H1 (cell line): ENCODE measurements at regions of chr22 and their contacts with region 1.

Region 1: GRCh38 chr22:32528984-32529982 is 54.7 kb downstream of the FBXO7 start:
- DNase-seq: peak; percentile 63 to 84
- H3K4me3 ChIP-seq: no peak overlapping the region
- H3K27ac ChIP-seq: no peak overlapping the region
- H3K4me1 ChIP-seq: no peaks in the 10 kb centered on the region; a peak in 1 of 7 replicates
- H3K27me3 ChIP-seq: no peaks in the 10 kb centered on the region
- CTCF ChIP-seq: peak; percentile 82 to 96 (median 93)
- EP300 ChIP-seq: no peak
- POLR2A ChIP-seq: no peak
- RAD21 ChIP-seq: peak; percentile 93 to 96

Region 2: GRCh38 chr22:32518848-32519247 is 10.4 kb before region 1 on chr22:
- CTCF ChIA-PET with region 1: interaction called, 20 read pairs
- POLR2A ChIA-PET with region 1: no interaction called
- DNase-seq: no peak
- H3K4me3 ChIP-seq: no peak overlapping the region
- H3K27ac ChIP-seq: no peak overlapping the region
- H3K4me1 ChIP-seq: no peaks in the 10 kb centered on the region
- H3K27me3 ChIP-seq: no peaks in the 10 kb centered on the region
- CTCF ChIP-seq: peak in 1 of 3 experiments; percentile 52; a peak in 1 of 4 replicates
- EP300 ChIP-seq: no peak
- POLR2A ChIP-seq: no peak
- RAD21 ChIP-seq: peak in 1 of 2 experiments; percentile 27; a peak in 1 of 4 replicates

Region 3: DNA sequence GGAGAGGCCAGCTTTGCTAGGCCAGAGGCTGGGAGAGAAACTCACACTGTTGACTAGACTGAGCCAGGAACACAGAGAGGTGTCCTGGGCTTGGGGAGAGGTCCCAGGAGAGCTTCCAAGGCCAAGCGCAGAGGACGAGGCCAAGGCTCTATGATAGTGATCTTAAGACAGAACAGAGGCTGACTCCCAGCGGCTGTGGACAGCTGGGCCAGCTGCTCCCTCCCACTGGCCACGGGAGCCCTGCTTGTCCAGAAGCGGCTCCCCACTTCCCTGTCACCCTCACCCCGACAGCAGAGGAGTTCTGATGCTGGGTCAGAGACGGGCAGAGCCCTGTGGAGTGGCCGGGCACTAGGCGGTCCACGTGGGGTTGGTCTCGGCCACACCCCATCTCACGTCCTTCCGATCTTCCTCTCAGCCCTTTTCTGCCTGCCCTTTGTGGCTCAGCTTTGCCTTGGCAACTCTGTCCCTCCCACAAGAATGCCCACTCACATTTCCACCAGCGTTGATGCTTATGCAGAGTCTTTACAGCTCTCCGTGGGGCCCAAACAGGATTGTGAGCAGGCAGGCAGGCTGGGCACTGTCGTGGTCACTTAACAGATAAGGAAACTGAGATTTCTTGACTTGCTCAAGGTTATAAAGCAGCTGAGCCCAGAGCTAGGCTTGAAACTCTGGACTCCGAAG is 13.5 kb after region 1 on chr22:
- CTCF ChIA-PET with region 1: interaction called, 16 read pairs
- POLR2A ChIA-PET with region 1: no interaction called
- DNase-seq: no peak
- H3K4me3 ChIP-seq: no peak overlapping the region
- H3K27ac ChIP-seq: no peak overlapping the region
- H3K4me1 ChIP-seq: no peaks in the 10 kb centered on the region
- H3K27me3 ChIP-seq: no peaks in the 10 kb centered on the region; a peak in 1 of 7 replicates
- CTCF ChIP-seq: no peak
- EP300 ChIP-seq: no peak
- POLR2A ChIP-seq: no peak
- RAD21 ChIP-seq: no peak

Region 4: DNA sequence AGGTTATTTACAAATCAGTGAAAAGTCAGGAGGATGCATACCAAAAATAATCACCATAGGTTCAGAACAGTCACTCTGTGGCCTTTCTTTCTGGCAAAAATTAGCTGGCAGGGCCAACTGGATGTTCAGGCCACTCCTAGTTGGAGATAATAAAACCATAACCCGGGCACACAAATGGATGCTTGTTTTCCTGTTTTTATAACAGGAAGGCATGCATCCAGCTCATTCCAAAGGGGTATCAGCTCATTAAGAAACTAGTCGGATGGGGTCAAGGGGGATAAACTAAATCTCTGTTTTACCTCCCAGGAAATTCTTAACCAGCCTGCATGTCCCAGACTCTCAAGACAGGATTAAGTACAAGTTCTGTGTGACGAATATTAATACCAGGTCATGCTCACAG is 26.3 kb after region 1 on chr22:
- CTCF ChIA-PET with region 1: interaction called, 13 read pairs
- POLR2A ChIA-PET with region 1: no interaction called
- DNase-seq: no peak
- H3K4me3 ChIP-seq: no peak overlapping the region
- H3K27ac ChIP-seq: no peak overlapping the region
- H3K4me1 ChIP-seq: peaks cover 0 to 3% (median under 1%) of the 10 kb centered on the region in 4 experiments; a peak in 1 of 7 replicates
- H3K27me3 ChIP-seq: no peaks in the 10 kb centered on the region
- CTCF ChIP-seq: no peak
- EP300 ChIP-seq: no peak
- POLR2A ChIP-seq: no peak
- RAD21 ChIP-seq: no peak

Region 5: DNA sequence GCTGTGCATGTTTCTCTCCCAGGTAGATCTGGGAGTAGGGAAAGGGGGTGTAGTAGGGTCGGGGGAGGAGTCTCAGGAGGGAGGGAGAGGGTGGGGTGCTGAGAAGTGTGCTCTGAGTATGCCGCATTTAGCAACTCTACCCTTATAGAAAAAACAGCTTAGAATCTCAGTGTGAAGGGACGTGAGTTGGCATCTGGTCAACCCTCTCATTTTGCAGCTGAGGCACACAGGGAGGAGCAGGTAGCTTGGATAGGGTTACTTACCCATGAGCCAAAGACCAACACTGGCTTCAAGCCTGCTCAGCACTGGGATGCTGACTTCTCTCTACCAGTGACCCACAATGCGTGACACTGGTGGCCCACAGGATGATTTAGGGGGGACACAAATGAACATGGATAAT is 41.2 kb after region 1 on chr22:
- CTCF ChIA-PET with region 1: interaction called, 15 read pairs
- POLR2A ChIA-PET with region 1: no interaction called
- DNase-seq: no peak
- H3K4me3 ChIP-seq: no peak overlapping the region
- H3K27ac ChIP-seq: no peak overlapping the region
- H3K4me1 ChIP-seq: peaks cover 0 to 4% (median 1%) of the 10 kb centered on the region in 4 experiments; a peak in 2 of 7 replicates
- H3K27me3 ChIP-seq: peaks cover 0 to 5% (median 0%) of the 10 kb centered on the region in 4 experiments; a peak in 1 of 7 replicates
- CTCF ChIP-seq: no peak
- EP300 ChIP-seq: no peak
- POLR2A ChIP-seq: no peak
- RAD21 ChIP-seq: no peak

Region 6: GRCh38 chr22:32628628-32629572 is 99.6 kb after region 1 on chr22:
- CTCF ChIA-PET with region 1: interaction called, 25 read pairs
- POLR2A ChIA-PET with region 1: no interaction called
- DNase-seq: no peak
- H3K4me3 ChIP-seq: no peak overlapping the region
- H3K27ac ChIP-seq: no peak overlapping the region
- H3K4me1 ChIP-seq: peaks cover 0 to 2% (median 0%) of the 10 kb centered on the region in 4 experiments; a peak in 1 of 7 replicates
- H3K27me3 ChIP-seq: peaks cover 0 to 6% (median 1%) of the 10 kb centered on the region in 4 experiments; a peak in 2 of 7 replicates
- CTCF ChIP-seq: no peak
- EP300 ChIP-seq: no peak
- POLR2A ChIP-seq: no peak
- RAD21 ChIP-seq: no peak